Natural killer cell (primary cell): ENCODE measurements at regions of chr15 and their contacts with region 1.

Region 1: DNA sequence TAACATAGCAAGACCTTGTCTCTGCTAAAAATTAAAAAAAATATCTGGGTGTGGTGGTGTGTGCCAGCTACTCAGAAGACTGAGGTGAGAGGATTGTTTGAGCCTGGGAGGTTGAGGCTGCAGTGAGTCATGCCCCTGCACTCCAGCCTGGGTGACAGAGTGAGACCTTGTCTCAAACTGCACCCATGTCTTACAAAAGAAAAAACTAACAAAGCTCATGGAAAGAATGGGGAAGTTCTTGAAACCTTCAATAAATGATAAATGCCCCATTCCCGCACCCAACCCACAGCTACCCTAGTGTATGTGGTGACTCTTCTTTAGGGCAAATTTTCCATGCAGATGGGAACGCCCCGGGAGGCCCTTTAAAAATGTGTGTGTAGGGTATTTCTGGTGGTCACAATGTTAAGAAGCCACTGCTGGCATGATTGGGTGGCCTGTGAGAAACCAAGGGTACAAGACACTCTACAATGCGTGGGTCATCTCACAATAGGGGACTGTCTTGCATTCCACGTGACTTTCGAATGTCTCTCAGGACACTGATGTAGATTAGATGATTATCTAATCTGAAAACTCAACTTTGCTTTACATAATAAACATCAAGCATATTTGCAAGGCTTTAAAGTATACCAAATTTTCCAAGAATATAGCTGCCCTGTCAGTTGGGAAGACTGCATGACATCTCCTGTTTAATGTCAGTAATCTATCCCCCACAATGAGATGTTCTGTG is 28.5 kb downstream of the RPLP1 start:
- DNase-seq: no peak
- ATAC-seq: peak; percentile 33 to 86 (median 60)
- H3K4me3 ChIP-seq: no peak overlapping the region
- H3K4me3 Mint-ChIP-seq: no peak overlapping the region
- H3K27ac ChIP-seq: no peak overlapping the region
- H3K27ac Mint-ChIP-seq: peak overlapping the region in 1 of 2 donors; percentile 57
- H3K4me1 ChIP-seq: peaks cover 29% of the 10 kb centered on the region
- H3K4me1 Mint-ChIP-seq: peaks cover 45 to 51% of the 10 kb centered on the region in 2 donors
- H3K27me3 ChIP-seq: no peaks in the 10 kb centered on the region
- H3K27me3 Mint-ChIP-seq: peaks cover 10 to 11% of the 10 kb centered on the region in 2 donors
- CTCF ChIP-seq: no peak

Region 2: DNA sequence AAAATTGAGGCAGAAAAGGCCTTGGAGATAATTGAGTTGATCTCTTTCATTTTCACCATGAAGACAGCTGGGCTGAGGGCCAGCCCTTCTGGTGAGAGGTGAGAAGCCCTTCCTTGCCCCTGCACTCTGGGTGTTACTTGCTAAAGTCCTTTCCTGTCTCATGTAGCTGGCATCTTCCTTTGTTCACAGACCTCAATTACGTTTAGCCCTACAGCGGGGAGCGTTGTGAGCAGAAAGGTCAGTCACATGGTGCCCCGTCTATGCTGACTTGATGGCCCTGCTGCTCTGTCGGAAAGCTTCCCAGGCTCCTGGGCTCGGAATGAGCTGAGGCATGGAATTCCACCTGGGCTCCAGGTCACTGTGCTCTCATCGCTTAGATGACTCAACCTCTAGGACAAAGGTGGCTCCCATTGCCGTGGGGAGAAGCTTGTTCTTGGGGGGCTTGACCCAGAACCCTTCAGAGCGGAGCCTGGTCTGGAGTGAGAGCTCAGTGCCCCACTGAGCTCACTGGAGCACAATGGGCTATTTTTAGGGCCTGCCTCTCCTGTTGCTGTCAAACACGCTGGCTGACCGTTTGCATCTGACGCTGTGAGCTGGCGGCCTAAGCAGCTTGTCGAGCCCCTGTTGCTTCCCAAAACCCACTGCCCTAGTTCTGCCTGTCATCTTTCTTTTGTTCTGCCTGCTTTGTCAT is 18.6 kb after region 1 on chr15:
- intact Hi-C with region 1: loop called (anchors 2 kb)
- DNase-seq: peak in 1 of 2 donors; percentile 19
- ATAC-seq: peak; percentile 66 to 92 (median 83)
- H3K4me3 ChIP-seq: no peak overlapping the region
- H3K4me3 Mint-ChIP-seq: peak overlapping the region; percentile 70
- H3K27ac ChIP-seq: peak overlapping the region; percentile 89
- H3K27ac Mint-ChIP-seq: peak overlapping the region; percentile 81 to 93
- H3K4me1 ChIP-seq: peaks cover 47% of the 10 kb centered on the region
- H3K4me1 Mint-ChIP-seq: peaks cover 59 to 67% of the 10 kb centered on the region in 2 donors
- H3K27me3 ChIP-seq: no peaks in the 10 kb centered on the region
- H3K27me3 Mint-ChIP-seq: no peaks in the 10 kb centered on the region
- CTCF ChIP-seq: no peak